ENCODE measurements at regions of chr6 and their contacts with region 1.

Region 1: GRCh38 chr6:133973109-133973971 is 20.3 kb downstream of the TBPL1 start:
- DNase-seq: peak; percentile 69
- H3K4me3 ChIP-seq: no peak overlapping the region
- H3K27ac ChIP-seq: peak overlapping the region; percentile 13
- H3K4me1 ChIP-seq: peaks cover 20% of the 10 kb centered on the region
- CTCF ChIP-seq: peak; percentile 97

Region 2: GRCh38 chr6:133923938-133924593 is 49.3 kb before region 1 on chr6:
- CTCF ChIA-PET with region 1: interaction called, 4 read pairs
- POLR2A ChIA-PET with region 1: interaction called, 3 read pairs
- intact Hi-C with region 1: loop called (anchors 2 kb)
- DNase-seq: peak; percentile 69
- H3K4me3 ChIP-seq: no peak overlapping the region
- H3K27ac ChIP-seq: no peak overlapping the region
- H3K4me1 ChIP-seq: no peaks in the 10 kb centered on the region
- CTCF ChIP-seq: peak; percentile 98

Region 3: DNA sequence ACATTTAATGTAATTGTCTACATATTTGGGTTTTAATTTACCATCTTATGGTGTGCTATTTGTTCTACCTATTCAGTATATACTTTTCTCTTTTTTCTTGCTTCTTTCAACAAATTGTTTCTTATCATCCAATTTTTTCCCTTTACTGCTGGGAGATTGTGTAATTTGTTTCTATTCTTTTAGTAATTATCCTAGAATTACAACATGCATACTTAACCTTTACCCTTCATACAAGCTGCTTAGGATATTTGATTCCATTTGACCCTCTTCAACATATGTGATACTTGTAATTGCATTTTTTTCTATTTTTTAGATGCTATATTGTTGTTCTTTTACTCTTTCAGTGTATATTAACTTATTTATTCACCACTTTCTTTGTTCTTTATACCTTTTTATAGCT is 35.4 kb before region 1 on chr6:
- CTCF ChIA-PET with region 1: no interaction called
- POLR2A ChIA-PET with region 1: no interaction called
- intact Hi-C with region 1: no loop called
- DNase-seq: no peak
- H3K4me3 ChIP-seq: no peak overlapping the region
- H3K27ac ChIP-seq: no peak overlapping the region
- H3K4me1 ChIP-seq: no peaks in the 10 kb centered on the region
- CTCF ChIP-seq: no peak

Region 4: GRCh38 chr6:133952815-133953633 is 20.3 kb before region 1 on chr6 and contains the start of gene TBPL1:
- CTCF ChIA-PET with region 1: interaction called, 7 read pairs
- POLR2A ChIA-PET with region 1: interaction called, 57 read pairs
- intact Hi-C with region 1: no loop called
- DNase-seq: peak; percentile 96
- H3K4me3 ChIP-seq: peak within 1 kb of the TSS; percentile 99
- H3K27ac ChIP-seq: peak within 1 kb of the TSS; percentile 77
- H3K4me1 ChIP-seq: peaks cover 45% of the 10 kb centered on the region
- CTCF ChIP-seq: no peak
- total RNA-seq, gene TBPL1: 25.9 and 27.8 TPM in 2 replicates

Region 5: DNA sequence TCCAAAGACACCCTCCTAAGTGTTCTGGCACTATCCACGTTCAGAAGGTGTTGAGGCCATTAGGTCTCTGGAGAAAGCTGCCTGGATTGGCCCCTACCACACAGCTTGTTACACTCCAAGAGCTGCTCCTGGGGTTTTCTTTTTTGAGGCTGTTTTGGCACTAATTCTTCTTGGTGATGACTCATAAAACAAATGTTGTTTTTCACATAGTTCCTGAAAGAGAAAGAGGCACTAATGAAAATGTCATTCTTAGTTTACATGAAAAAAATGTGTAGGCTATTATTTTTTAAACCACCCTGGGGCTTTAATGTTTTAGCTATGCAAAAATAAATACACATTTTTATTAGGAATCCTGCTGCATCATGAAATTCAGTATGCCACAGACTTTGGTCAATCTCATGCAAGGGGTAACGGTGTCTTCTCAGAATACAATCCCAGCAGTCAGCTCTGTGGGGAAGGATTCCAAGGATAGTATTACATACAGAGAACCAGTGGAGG is 17.8 kb after region 1 on chr6:
- CTCF ChIA-PET with region 1: no interaction called
- POLR2A ChIA-PET with region 1: interaction called, 24 read pairs
- intact Hi-C with region 1: no loop called
- DNase-seq: no peak
- H3K4me3 ChIP-seq: no peak overlapping the region
- H3K27ac ChIP-seq: no peak overlapping the region
- H3K4me1 ChIP-seq: no peaks in the 10 kb centered on the region
- CTCF ChIP-seq: no peak

Region 6: GRCh38 chr6:134002821-134003220 is 29.5 kb after region 1 on chr6:
- CTCF ChIA-PET with region 1: no interaction called
- POLR2A ChIA-PET with region 1: no interaction called
- intact Hi-C with region 1: no loop called
- DNase-seq: no peak
- H3K4me3 ChIP-seq: no peak overlapping the region
- H3K27ac ChIP-seq: no peak overlapping the region
- H3K4me1 ChIP-seq: no peaks in the 10 kb centered on the region
- CTCF ChIP-seq: no peak

Region 7: GRCh38 chr6:134063966-134064445 is 90.7 kb after region 1 on chr6:
- CTCF ChIA-PET with region 1: interaction called, 6 read pairs
- POLR2A ChIA-PET with region 1: interaction called, 6 read pairs
- intact Hi-C with region 1: loop called (anchors 1 kb)
- DNase-seq: peak; percentile 69
- H3K4me3 ChIP-seq: no peak overlapping the region
- H3K27ac ChIP-seq: no peak overlapping the region
- H3K4me1 ChIP-seq: no peaks in the 10 kb centered on the region
- CTCF ChIP-seq: peak; percentile 90

Region 8: DNA sequence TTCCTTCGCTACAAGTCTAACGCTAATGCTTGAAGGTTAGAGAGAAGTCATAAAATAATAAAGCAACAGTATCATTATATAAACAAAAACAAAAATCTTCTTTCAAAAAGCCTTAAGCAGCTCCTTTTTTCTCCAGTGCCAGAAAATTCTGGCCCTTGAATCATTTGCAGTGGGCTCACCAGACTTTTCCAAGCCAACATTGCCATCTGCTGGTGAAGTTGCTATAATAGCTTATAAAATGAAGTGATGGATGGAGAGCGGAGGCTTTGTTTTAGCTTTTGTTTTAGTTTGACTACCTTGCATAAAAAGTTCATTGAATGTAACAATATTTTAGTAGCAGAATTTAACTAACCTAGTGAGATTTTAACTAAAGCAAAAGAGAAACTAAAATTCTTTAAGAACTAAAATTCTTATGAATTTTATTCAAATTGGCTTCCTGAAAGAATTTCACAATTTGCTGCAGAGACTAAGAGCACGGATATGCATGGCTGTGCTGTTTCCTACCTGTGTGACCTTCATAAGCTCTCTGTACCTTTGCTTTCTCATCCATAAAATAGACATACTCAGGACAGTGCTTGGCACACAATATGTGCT is 123.9 kb after region 1 on chr6:
- CTCF ChIA-PET with region 1: interaction called, 6 read pairs
- POLR2A ChIA-PET with region 1: interaction called, 5 read pairs
- intact Hi-C with region 1: loop called (anchors 1 kb)
- DNase-seq: peak; percentile 70
- H3K4me3 ChIP-seq: no peak overlapping the region
- H3K27ac ChIP-seq: no peak overlapping the region
- H3K4me1 ChIP-seq: no peaks in the 10 kb centered on the region
- CTCF ChIP-seq: peak; percentile 93

Region 9: DNA sequence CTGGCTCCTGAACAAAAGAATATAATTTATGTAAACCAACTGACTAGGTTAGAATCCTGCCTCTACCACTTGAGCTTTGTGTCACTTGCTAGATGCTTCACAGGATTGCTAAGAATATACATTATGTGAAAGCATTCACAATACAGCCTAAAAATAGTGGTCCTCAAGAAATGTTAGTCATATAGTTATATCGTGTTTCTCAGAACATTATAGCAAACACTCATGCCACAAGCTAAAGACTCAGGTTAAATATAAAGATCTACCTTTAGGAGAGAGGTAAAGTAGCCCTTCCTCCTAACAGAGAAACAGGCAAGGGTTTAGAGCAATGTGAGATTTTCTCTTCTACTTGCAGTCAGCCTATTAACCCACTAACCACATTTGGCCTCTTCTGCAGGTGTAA is 994.4 kb after region 1 on chr6:
- CTCF ChIA-PET with region 1: no interaction called
- POLR2A ChIA-PET with region 1: no interaction called
- intact Hi-C with region 1: no loop called
- DNase-seq: no peak
- H3K4me3 ChIP-seq: no peak overlapping the region
- H3K27ac ChIP-seq: no peak overlapping the region
- H3K4me1 ChIP-seq: no peaks in the 10 kb centered on the region
- CTCF ChIP-seq: no peak

Measured in OCI-LY7 (cell line).